HCT116 (cell line): ENCODE measurements at regions of chr4 and their contacts with region 1.

Region 1: GRCh38 chr4:170259631-170260153 is 169.9 kb upstream of the AADAT start:
- DNase-seq: peak; percentile 93
- ATAC-seq: peak; percentile 98
- H3K4me3 ChIP-seq: no peak overlapping the region
- H3K27ac ChIP-seq: no peak overlapping the region
- H3K4me1 ChIP-seq: no peaks in the 10 kb centered on the region
- H3K27me3 ChIP-seq: no peaks in the 10 kb centered on the region
- CTCF ChIP-seq: peak; percentile 94 to 99 (median 98)
- POLR2A ChIP-seq: no peak
- RAD21 ChIP-seq: peak; percentile 97

Region 2: DNA sequence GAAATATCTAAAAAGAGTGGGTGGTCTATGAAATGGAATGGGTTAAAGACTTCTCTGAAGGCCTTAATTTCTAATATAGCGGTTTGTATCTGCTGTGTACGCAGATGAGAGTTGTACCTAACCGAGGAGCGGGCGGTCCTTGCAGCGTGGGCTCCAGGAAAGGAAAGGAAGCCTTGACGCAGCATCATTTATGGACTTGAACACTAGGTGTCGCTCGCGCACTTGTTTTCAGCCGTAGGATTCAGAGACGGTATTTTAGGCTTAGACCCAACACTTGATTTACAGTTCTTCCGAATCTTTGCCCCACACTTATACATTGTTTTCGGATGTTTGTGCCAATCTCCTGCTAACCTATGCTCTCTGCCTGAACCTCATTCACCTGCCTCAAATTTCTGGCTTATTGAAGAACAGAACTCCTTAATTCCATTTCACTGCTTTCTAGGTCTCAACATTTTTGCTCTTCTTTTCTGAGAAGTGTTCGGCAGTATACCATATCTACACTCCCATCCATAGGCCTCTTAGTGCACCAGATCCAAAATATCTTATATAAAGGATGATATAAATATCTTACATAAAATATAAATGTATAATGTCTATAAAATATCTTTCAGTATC is 121.0 kb before region 1 on chr4:
- CTCF ChIA-PET with region 1: no interaction called
- POLR2A ChIA-PET with region 1: no interaction called
- RAD21 ChIA-PET with region 1: interaction called in 1 of 2 experiments, 3 read pairs
- intact Hi-C with region 1: loop called (anchors 1 kb)
- DNase-seq: peak; percentile 71
- ATAC-seq: peak; percentile 97
- H3K4me3 ChIP-seq: no peak overlapping the region
- H3K27ac ChIP-seq: no peak overlapping the region
- H3K4me1 ChIP-seq: no peaks in the 10 kb centered on the region
- H3K27me3 ChIP-seq: no peaks in the 10 kb centered on the region
- CTCF ChIP-seq: peak; percentile 68 to 81 (median 70)
- POLR2A ChIP-seq: no peak
- RAD21 ChIP-seq: peak; percentile 90

Region 3: DNA sequence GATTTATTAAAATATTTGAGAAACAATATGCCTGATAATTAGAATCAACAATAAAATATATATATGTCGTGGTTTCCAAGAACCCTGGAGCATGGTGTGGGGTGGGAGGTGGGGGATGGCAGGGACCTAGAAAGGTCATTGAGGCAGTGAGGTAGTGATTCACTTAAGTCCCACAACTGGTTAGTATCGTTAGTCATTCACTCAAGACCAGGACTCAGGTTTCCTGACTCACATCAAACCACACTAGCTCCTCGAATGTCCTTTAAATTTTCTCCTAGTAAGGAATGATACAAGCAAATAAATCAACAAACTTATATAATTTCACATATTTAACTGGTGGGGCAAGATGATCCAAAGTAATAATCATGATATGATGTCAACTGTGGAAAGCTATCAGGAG is 11.1 kb before region 1 on chr4:
- CTCF ChIA-PET with region 1: interaction called, 36 read pairs
- POLR2A ChIA-PET with region 1: no interaction called
- RAD21 ChIA-PET with region 1: no interaction called
- intact Hi-C with region 1: no loop called
- DNase-seq: no peak
- ATAC-seq: no peak
- H3K4me3 ChIP-seq: no peak overlapping the region
- H3K27ac ChIP-seq: no peak overlapping the region
- H3K4me1 ChIP-seq: peaks cover 0 to 14% of the 10 kb centered on the region in 2 experiments; a peak in 1 of 4 replicates
- H3K27me3 ChIP-seq: no peaks in the 10 kb centered on the region
- CTCF ChIP-seq: no peak
- POLR2A ChIP-seq: no peak
- RAD21 ChIP-seq: no peak

Region 4: DNA sequence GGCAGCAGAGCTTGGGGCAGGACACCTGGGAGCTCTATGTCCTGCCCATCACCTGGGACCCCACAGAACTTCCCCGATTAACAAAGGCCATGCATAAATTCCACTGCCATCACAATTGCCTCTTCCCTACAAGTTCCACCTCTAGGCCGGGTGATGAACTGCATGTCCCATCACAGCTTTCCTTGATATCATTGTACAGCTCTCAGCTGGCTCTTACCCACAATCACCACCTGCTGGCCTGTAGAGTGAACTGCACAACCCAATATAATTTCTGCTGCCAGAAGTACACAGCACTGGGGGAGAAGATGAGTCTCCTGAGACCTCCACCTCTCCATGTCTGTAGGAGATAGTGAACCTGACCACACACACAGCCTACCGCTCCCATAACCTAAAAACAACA is 115.1 kb after region 1 on chr4:
- CTCF ChIA-PET with region 1: interaction called, 10 read pairs
- POLR2A ChIA-PET with region 1: no interaction called
- RAD21 ChIA-PET with region 1: interaction called in 1 of 2 experiments, 4 read pairs
- intact Hi-C with region 1: loop called (anchors 2 kb)
- DNase-seq: peak; percentile 40
- ATAC-seq: peak; percentile 97
- H3K4me3 ChIP-seq: no peak overlapping the region
- H3K27ac ChIP-seq: no peak overlapping the region
- H3K4me1 ChIP-seq: no peaks in the 10 kb centered on the region
- H3K27me3 ChIP-seq: no peaks in the 10 kb centered on the region
- CTCF ChIP-seq: peak; percentile 73 to 81 (median 78); a peak in 5 of 6 replicates
- POLR2A ChIP-seq: no peak
- RAD21 ChIP-seq: peak; percentile 57

Region 5: GRCh38 chr4:171846232-171846631 is 1586.5 kb after region 1 on chr4:
- CTCF ChIA-PET with region 1: no interaction called
- POLR2A ChIA-PET with region 1: no interaction called
- RAD21 ChIA-PET with region 1: no interaction called
- intact Hi-C with region 1: loop called (anchors 2 kb)
- DNase-seq: peak; percentile 42
- ATAC-seq: peak; percentile 86
- H3K4me3 ChIP-seq: no peak overlapping the region
- H3K27ac ChIP-seq: no peak overlapping the region
- H3K4me1 ChIP-seq: no peaks in the 10 kb centered on the region
- H3K27me3 ChIP-seq: no peaks in the 10 kb centered on the region
- CTCF ChIP-seq: peak; percentile 62 to 81 (median 75)
- POLR2A ChIP-seq: no peak
- RAD21 ChIP-seq: peak; percentile 86